ENCODE measurements at regions of chr2 and their contacts with region 1.

Region 1: GRCh38 chr2:27123302-27124231 is at the start of gene ABHD1:
- DNase-seq: peak; percentile 56
- H3K4me3 Mint-ChIP-seq: peak within 1 kb of the TSS; percentile 81
- H3K27ac Mint-ChIP-seq: peak within 1 kb of the TSS; percentile 77
- H3K4me1 Mint-ChIP-seq: peaks cover 15% of the 10 kb centered on the region
- H3K27me3 Mint-ChIP-seq: peaks cover 32% of the 10 kb centered on the region
- total RNA-seq, gene ABHD1: 0.10 to 0.25 TPM

Region 2: GRCh38 chr2:27133905-27134780 is 10.6 kb after region 1 on chr2 and contains the start of gene PREB:
- CTCF ChIA-PET with region 1: interaction called, 11 read pairs
- POLR2A ChIA-PET with region 1: no interaction called
- DNase-seq: peak; percentile 98
- H3K4me3 Mint-ChIP-seq: peak within 1 kb of the TSS; percentile 79
- H3K27ac Mint-ChIP-seq: peak within 1 kb of the TSS; percentile 94
- H3K4me1 Mint-ChIP-seq: peaks cover 29% of the 10 kb centered on the region
- H3K27me3 Mint-ChIP-seq: no peaks in the 10 kb centered on the region
- total RNA-seq, gene PREB: 60.0 to 65.3 TPM

Region 3: GRCh38 chr2:27362678-27363420 is 239.3 kb after region 1 on chr2:
- CTCF ChIA-PET with region 1: no interaction called
- POLR2A ChIA-PET with region 1: interaction called, 16 read pairs
- DNase-seq: no peak
- H3K4me3 Mint-ChIP-seq: no peak overlapping the region
- H3K27ac Mint-ChIP-seq: no peak overlapping the region
- H3K4me1 Mint-ChIP-seq: peaks cover 14% of the 10 kb centered on the region
- H3K27me3 Mint-ChIP-seq: no peaks in the 10 kb centered on the region

Measured in activated CD4-positive, alpha-beta T cell treated with anti-CD3 and anti-CD28 coated beads, Interleukin-2, amount 10 ng/mL, durations not matched to agents 7 days and 5 days (primary cell).